Heart left ventricle (tissue), 16 donors: ENCODE measurements at regions of chr3 and their contacts with region 1.

Region 1: GRCh38 chr3:129732200-129732876 is 125.9 kb upstream of the PLXND1 start:
- DNase-seq: no peak
- ATAC-seq: no peak
- H3K4me3 ChIP-seq: no peak overlapping the region
- H3K27ac ChIP-seq: no peak overlapping the region
- H3K4me1 ChIP-seq: peaks cover 0 to 4% (median 0%) of the 10 kb centered on the region in 12 donors
- H3K27me3 ChIP-seq: no peaks in the 10 kb centered on the region
- CTCF ChIP-seq: no peak
- POLR2A ChIP-seq: no peak

Region 2: GRCh38 chr3:129526121-129526900 is 206.0 kb before region 1 on chr3:
- intact Hi-C with region 1: no loop called
- DNase-seq: no peak
- ATAC-seq: peak in 1 of 4 donors; percentile 54
- H3K4me3 ChIP-seq: no peak overlapping the region
- H3K27ac ChIP-seq: peak overlapping the region in 1 of 12 donors; percentile 37
- H3K4me1 ChIP-seq: peaks cover 0 to 27% (median 7%) of the 10 kb centered on the region in 12 donors
- H3K27me3 ChIP-seq: no peaks in the 10 kb centered on the region
- CTCF ChIP-seq: no peak
- POLR2A ChIP-seq: no peak

Region 3: DNA sequence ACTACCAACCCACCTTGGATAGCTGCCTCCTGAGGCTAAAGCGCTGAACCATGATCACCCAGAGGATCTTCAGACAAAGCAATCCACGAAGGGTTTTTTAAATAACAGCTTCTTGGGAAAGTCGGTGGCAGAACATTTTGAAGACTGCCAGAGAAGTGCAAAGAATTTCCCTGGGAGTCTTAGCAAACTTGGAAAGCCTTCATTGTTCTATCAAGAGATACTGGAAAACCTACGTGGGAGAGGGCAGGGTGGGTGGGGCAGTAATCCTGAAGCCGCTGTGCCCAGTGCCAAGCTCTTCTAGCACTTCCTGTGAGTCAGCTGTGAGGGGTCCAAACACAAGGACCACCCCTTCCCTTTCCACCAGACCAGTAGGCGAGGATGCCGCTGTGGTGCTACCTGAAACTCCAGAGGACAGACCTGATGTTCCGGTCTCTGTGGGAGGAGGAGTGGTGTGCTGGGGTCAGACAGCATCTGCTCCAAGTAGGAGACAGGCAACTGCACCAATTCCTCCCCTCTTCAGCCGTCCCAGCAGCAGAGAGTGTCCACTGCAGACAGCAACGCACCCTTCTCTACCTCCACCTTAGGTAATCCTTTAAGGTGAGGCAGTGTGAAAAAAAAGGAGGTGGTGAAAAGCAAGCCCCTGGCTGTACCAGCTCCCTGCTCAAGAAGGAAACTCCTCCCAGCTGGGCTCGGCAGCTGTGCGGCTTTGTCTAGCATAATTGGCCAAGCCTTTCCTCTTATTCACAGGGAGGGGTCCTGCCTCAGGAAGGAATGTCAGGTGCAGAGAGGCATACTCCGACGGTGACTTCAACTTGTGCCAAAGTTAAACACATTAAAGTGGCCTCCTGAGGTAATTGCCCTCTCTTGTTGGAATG is 62.2 kb after region 1 on chr3:
- intact Hi-C with region 1: loop called in 1 of 10 experiments (anchors 2 kb)
- DNase-seq: peak; percentile 17 to 65 (median 29)
- ATAC-seq: peak in 3 of 4 donors; percentile 66 to 81 (median 80)
- H3K4me3 ChIP-seq: peak overlapping the region in 9 of 12 donors; percentile 24 to 41 (median 28)
- H3K27ac ChIP-seq: peak overlapping the region in 11 of 12 donors; percentile 14 to 87 (median 51)
- H3K4me1 ChIP-seq: peaks cover 0 to 25% (median 18%) of the 10 kb centered on the region in 12 donors
- H3K27me3 ChIP-seq: no peaks in the 10 kb centered on the region
- CTCF ChIP-seq: no peak
- POLR2A ChIP-seq: no peak